Adrenal gland (tissue), 19 donors: ENCODE measurements at regions of chr20 and their contacts with region 1.

Region 1: GRCh38 chr20:49330544-49331239 is 52.8 kb upstream of the ZNFX1 start:
- DNase-seq: no peak
- H3K4me3 ChIP-seq: no peak overlapping the region
- H3K27ac ChIP-seq: no peak overlapping the region
- H3K4me1 ChIP-seq: no peaks in the 10 kb centered on the region
- H3K27me3 ChIP-seq: peaks cover 4% of the 10 kb centered on the region
- CTCF ChIP-seq: no peak
- POLR2A ChIP-seq: no peak

Region 2: DNA sequence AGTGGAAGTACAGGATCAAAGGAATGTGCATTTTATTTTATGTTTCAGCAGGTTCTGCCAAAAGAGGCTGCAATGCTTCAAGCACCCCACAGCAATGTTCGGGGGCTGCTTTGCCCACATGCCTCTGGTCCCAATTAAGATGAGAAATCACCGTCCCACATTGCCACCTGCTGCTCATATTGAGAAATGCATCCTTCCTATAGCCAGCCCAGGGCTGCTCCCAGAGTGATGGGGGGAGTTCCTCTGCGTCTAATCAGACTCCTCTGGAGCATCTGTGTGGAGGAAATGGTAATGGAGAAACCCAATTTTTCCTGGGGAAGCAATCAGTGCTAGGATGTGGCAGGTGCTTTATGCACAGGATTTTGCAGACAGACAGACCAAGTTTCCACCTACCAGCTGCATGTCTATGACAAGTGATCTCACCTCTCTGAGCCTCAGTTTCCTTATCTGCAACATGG is 203.6 kb after region 1 on chr20:
- intact Hi-C with region 1: loop called (anchors 5 kb)
- DNase-seq: peak; percentile 38 to 74 (median 44)
- H3K4me3 ChIP-seq: no peak overlapping the region
- H3K27ac ChIP-seq: no peak overlapping the region
- H3K4me1 ChIP-seq: no peaks in the 10 kb centered on the region
- H3K27me3 ChIP-seq: peaks cover 4% of the 10 kb centered on the region
- CTCF ChIP-seq: peak; percentile 59 to 77 (median 70)
- POLR2A ChIP-seq: no peak

Region 3: DNA sequence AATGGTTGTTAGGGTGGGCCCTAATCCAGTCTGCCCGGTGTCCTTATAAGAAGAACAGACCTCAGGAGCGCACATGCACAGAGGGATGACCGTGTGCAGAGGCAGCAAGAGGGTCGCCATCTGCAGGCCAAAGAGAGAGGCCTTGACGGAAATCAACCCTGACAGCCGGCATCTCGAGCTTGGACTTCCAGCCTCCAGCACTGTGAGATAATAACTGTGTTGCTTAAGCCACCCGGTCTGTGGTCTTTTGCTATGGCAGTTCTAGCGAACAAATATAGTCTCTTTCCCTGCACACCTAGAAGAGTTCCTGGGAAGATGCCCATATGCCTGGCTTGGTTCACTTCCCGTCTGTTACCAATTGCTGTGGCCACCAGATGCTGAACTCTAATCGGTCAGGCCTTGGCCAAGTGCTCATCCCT is 272.5 kb after region 1 on chr20:
- intact Hi-C with region 1: loop called (anchors 5 to 10 kb)
- DNase-seq: no peak
- H3K4me3 ChIP-seq: no peak overlapping the region
- H3K27ac ChIP-seq: no peak overlapping the region
- H3K4me1 ChIP-seq: no peaks in the 10 kb centered on the region
- H3K27me3 ChIP-seq: no peaks in the 10 kb centered on the region
- CTCF ChIP-seq: peak in 3 of 6 experiments; percentile 18 to 28 (median 19)
- POLR2A ChIP-seq: no peak

Region 4: DNA sequence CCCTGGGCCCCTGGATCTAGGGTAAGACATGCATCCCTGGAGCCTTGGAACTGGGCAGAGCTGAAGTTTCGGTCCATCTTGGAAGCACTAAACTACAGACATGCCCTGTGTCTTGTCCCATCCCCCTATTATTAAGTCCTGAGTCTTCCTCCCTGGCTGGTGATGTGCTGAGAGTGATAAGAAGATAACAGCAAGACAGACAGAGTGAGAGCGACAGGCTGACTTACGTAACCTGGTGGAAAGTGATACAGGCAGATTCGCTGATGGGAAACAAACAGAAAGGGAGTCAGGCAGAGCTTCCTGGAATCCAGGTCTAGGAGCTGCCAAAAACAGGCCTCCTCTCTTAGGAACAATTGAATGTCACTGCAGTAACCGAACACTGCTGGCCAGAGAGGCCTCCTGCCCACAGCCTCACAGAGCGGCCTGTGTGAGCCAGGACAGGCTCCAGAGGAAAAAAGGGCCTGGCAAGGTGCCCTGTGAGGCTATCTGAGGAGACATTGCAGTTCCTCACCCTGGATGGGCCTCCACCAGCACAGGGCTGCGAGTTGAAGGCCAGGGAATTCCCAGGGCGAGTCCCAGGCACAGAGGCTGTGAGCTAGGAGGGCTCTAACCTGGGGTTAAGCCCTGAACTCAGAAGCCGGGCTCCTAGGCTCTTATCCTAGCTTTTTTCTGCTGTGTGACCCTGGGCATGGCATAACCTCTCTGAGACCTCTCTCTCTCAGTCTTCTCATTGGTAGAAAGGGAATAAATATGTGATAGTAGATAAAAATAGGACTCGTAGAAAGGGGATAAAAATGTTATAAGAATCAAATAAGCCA is 417.2 kb after region 1 on chr20:
- intact Hi-C with region 1: no loop called
- DNase-seq: peak; percentile 85 to 98 (median 97)
- H3K4me3 ChIP-seq: no peak overlapping the region
- H3K27ac ChIP-seq: peak overlapping the region; percentile 55 to 95 (median 88)
- H3K4me1 ChIP-seq: peaks cover 10 to 15% of the 10 kb centered on the region in 2 donors
- H3K27me3 ChIP-seq: no peaks in the 10 kb centered on the region
- CTCF ChIP-seq: no peak
- POLR2A ChIP-seq: peak in 1 of 2 donors; percentile 61